ENCODE measurements at regions of chr6 and their contacts with region 1.

Region 1: GRCh38 chr6:35611240-35611639 is 77.5 kb downstream of the FKBP5 start:
- DNase-seq: no peak
- H3K4me3 Mint-ChIP-seq: no peak overlapping the region
- H3K27ac Mint-ChIP-seq: no peak overlapping the region
- H3K4me1 Mint-ChIP-seq: peaks cover 2% of the 10 kb centered on the region
- H3K27me3 Mint-ChIP-seq: no peaks in the 10 kb centered on the region
- CTCF ChIP-seq: no peak

Region 2: GRCh38 chr6:35624341-35625070 is 13.3 kb after region 1 on chr6:
- CTCF ChIA-PET with region 1: interaction called, 10 read pairs
- intact Hi-C with region 1: no loop called
- DNase-seq: no peak
- H3K4me3 Mint-ChIP-seq: no peak overlapping the region
- H3K27ac Mint-ChIP-seq: no peak overlapping the region
- H3K4me1 Mint-ChIP-seq: no peaks in the 10 kb centered on the region
- H3K27me3 Mint-ChIP-seq: no peaks in the 10 kb centered on the region
- CTCF ChIP-seq: no peak

Measured in Calu3 (cell line).